ENCODE measurements at regions of chr10 and their contacts with region 1.

Region 1: GRCh38 chr10:11610166-11610825 is 1.2 kb downstream of the USP6NL start:
- DNase-seq: peak in 1 of 3 donors; percentile 35
- H3K4me3 ChIP-seq: peak overlapping the region; percentile 93 to 99 (median 97)
- H3K27ac ChIP-seq: peak overlapping the region; percentile 79 to 88
- H3K4me1 ChIP-seq: peaks cover 9 to 49% (median 34%) of the 10 kb centered on the region in 4 experiments
- H3K27me3 ChIP-seq: no peaks in the 10 kb centered on the region

Region 2: DNA sequence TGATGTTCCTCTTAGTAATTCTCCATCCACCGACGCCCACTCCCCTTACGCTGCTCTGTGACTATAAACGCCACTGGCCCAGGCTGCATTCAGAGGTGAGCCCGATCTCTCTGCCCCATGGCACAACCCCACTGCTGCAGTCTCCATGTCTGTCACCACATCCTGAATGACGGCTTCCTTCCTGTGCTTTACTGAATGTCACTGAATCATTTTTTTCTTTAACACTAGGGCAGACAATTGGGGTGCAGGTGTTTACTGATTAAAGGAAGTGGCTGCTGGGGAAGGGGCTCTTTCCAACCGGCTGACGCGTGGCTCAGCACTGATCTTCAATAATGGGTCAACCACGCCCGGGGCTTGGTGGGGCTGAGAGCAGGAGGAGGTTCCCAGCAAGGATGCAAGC is 207.2 kb before region 1 on chr10:
- CTCF ChIA-PET with region 1: no interaction called
- POLR2A ChIA-PET with region 1: no interaction called
- DNase-seq: peak; percentile 86 to 97 (median 94)
- H3K4me3 ChIP-seq: peak overlapping the region in 4 of 7 experiments; percentile 2 to 47 (median 21)
- H3K27ac ChIP-seq: peak overlapping the region in 1 of 2 experiments; percentile 43
- H3K4me1 ChIP-seq: peaks cover 0 to 36% (median 26%) of the 10 kb centered on the region in 4 experiments
- H3K27me3 ChIP-seq: no peaks in the 10 kb centered on the region

Region 3: GRCh38 chr10:11569471-11569870 is 40.8 kb before region 1 on chr10:
- CTCF ChIA-PET with region 1: interaction called, 11 read pairs
- POLR2A ChIA-PET with region 1: no interaction called
- DNase-seq: no peak
- H3K4me3 ChIP-seq: no peak overlapping the region
- H3K27ac ChIP-seq: no peak overlapping the region
- H3K4me1 ChIP-seq: peaks cover 12 to 27% (median 19%) of the 10 kb centered on the region in 4 experiments
- H3K27me3 ChIP-seq: no peaks in the 10 kb centered on the region

Measured in common myeloid progenitor, CD34-positive (primary cell).